ENCODE measurements at regions of chr2 and their contacts with region 1.

Region 1: DNA sequence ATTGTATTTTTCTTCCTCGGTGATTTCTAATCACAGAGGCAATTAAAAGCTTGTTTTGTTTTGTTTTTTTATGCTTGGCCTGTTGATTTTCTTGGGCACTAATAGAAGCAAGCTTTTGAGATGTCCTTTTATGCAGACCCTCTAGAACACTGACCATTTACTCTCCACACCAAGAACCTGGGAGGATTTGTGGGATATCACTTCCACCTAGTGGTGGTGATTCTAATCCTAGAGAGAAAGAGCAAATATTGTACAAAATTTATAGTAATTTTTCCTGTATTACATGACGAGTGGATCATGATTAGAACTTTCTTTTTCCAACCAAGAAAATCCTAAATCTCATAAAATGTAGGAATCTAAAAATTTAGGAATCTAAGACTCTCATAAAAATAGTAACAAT is 23.4 kb downstream of the NEMP2 start:
- DNase-seq: peak; percentile 65
- H3K4me3 ChIP-seq: no peak overlapping the region
- H3K27ac ChIP-seq: no peak overlapping the region
- H3K4me1 ChIP-seq: no peaks in the 10 kb centered on the region
- H3K27me3 ChIP-seq: no peaks in the 10 kb centered on the region
- CTCF ChIP-seq: peak; percentile 20 to 30
- POLR2A ChIP-seq: no peak

Region 2: GRCh38 chr2:190376591-190377245 is 134.4 kb before region 1 on chr2:
- CTCF ChIA-PET with region 1: interaction called, 35 read pairs
- POLR2A ChIA-PET with region 1: no interaction called
- dilution Hi-C with region 1: no loop called
- intact Hi-C with region 1: loop called (anchors 1 kb)
- DNase-seq: no peak
- H3K4me3 ChIP-seq: no peak overlapping the region
- H3K27ac ChIP-seq: no peak overlapping the region
- H3K4me1 ChIP-seq: no peaks in the 10 kb centered on the region
- H3K27me3 ChIP-seq: peaks cover 0 to 4% of the 10 kb centered on the region in 2 experiments
- CTCF ChIP-seq: no peak
- POLR2A ChIP-seq: no peak

Region 3: DNA sequence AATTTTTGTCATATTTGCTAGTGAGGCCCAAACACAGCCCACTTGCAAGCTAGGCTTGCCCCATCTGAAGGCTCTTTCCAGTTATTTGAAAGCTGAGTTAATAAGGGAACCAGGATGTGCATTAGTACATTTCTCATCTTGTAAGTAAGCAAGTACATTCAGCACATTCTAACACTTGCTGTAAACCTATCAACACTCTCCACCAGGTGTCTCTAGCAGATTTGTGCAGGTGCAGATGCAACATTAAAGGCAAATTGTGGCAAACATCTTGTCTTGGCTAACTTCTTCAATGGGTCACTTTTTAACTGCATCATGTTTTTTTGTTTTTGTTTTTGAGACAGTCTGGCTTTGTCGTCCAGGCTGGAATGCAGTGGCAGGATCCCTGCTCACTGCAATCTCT is 128.3 kb before region 1 on chr2:
- CTCF ChIA-PET with region 1: interaction called, 35 read pairs
- POLR2A ChIA-PET with region 1: no interaction called
- dilution Hi-C with region 1: no loop called
- intact Hi-C with region 1: loop called (anchors 1 kb)
- DNase-seq: peak; percentile 66
- H3K4me3 ChIP-seq: no peak overlapping the region
- H3K27ac ChIP-seq: no peak overlapping the region
- H3K4me1 ChIP-seq: no peaks in the 10 kb centered on the region
- H3K27me3 ChIP-seq: peaks cover 0 to 4% of the 10 kb centered on the region in 2 experiments
- CTCF ChIP-seq: peak; percentile 21 to 35
- POLR2A ChIP-seq: no peak

Region 4: GRCh38 chr2:190698895-190699294 is 187.8 kb after region 1 on chr2:
- CTCF ChIA-PET with region 1: no interaction called
- POLR2A ChIA-PET with region 1: no interaction called
- dilution Hi-C with region 1: no loop called
- intact Hi-C with region 1: no loop called
- DNase-seq: no peak
- H3K4me3 ChIP-seq: no peak overlapping the region
- H3K27ac ChIP-seq: no peak overlapping the region
- H3K4me1 ChIP-seq: no peaks in the 10 kb centered on the region
- H3K27me3 ChIP-seq: no peaks in the 10 kb centered on the region
- CTCF ChIP-seq: peak in 1 of 2 donors; percentile 27
- POLR2A ChIP-seq: no peak

Region 5: DNA sequence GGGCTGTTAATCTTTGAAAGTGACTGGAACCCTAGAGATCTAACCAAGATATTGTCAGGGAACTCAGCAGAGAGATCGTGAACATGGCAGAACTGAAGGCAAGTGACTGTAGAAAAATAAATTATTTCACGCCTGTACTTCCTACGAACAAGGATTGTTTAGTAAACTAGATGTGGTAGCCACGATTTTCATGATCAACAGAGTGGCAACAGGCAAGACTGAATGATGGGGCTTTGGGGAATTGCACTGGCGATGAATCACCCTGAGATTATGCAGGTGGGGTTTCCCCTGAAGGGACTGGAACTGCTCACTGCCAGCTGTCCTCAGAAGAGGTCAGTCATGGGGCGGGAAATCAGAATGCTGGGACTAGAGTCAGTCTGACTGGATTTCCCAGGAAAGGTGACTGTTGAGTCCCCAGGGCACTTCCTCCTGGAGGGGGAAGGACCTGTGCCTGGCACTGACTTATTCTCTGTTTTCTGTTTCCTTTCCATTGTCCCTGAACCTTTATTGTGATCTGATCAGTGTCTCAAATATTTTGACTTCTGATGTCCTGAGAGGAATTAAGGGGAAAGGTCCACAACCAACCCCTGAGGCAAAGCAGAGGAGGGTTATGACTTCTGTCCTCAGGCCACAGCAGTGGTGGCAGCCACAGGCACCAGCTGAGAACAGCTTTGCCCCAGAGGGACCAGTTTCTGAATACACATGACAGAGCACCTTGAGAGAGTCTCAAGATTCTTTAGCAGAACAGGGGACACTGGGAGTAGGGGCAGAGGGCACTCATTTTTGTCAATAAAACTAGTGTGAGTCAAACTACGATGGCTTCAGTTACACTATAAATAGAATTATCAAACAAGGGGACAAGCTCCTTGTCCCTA is 207.8 kb after region 1 on chr2:
- CTCF ChIA-PET with region 1: no interaction called
- POLR2A ChIA-PET with region 1: no interaction called
- dilution Hi-C with region 1: no loop called
- intact Hi-C with region 1: no loop called
- DNase-seq: peak; percentile 85
- H3K4me3 ChIP-seq: no peak overlapping the region
- H3K27ac ChIP-seq: peak overlapping the region; percentile 89
- H3K4me1 ChIP-seq: peaks cover 42% of the 10 kb centered on the region
- H3K27me3 ChIP-seq: no peaks in the 10 kb centered on the region
- CTCF ChIP-seq: no peak
- POLR2A ChIP-seq: no peak

Measured in endothelial cell of umbilical vein (primary cell).